Calu3 (cell line): ENCODE measurements at regions of chr21 and their contacts with region 1.

Region 1: DNA sequence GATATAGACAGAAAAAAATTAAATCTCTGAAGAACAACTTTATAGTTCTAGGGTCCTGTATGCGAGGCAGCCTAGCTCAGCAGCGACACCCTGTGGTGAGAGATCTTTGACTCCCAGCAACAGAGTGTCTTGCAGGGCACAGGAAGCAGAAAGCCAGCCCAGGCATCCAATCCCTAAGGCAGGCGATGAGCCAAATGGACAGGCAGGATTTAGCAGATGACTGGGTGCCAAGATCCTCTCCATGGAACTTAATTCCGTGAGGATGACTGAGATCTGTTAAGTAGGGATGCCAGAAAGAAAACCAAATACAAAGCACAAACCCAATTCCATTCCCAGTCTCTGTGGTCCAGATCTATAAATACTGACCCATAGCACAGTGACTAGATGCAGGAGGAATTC is 38.8 kb downstream of the HLCS start:
- DNase-seq: peak; percentile 78
- H3K4me3 Mint-ChIP-seq: no peak overlapping the region
- H3K27ac Mint-ChIP-seq: no peak overlapping the region
- H3K4me1 Mint-ChIP-seq: no peaks in the 10 kb centered on the region
- H3K27me3 Mint-ChIP-seq: no peaks in the 10 kb centered on the region
- CTCF ChIP-seq: peak; percentile 74

Region 2: GRCh38 chr21:36504067-36505058 is 423.4 kb before region 1 on chr21:
- CTCF ChIA-PET with region 1: no interaction called
- intact Hi-C with region 1: loop called (anchors 5 kb)
- DNase-seq: peak; percentile 37
- H3K4me3 Mint-ChIP-seq: no peak overlapping the region
- H3K27ac Mint-ChIP-seq: no peak overlapping the region
- H3K4me1 Mint-ChIP-seq: peaks cover 12% of the 10 kb centered on the region
- H3K27me3 Mint-ChIP-seq: no peaks in the 10 kb centered on the region
- CTCF ChIP-seq: peak; percentile 39

Region 3: DNA sequence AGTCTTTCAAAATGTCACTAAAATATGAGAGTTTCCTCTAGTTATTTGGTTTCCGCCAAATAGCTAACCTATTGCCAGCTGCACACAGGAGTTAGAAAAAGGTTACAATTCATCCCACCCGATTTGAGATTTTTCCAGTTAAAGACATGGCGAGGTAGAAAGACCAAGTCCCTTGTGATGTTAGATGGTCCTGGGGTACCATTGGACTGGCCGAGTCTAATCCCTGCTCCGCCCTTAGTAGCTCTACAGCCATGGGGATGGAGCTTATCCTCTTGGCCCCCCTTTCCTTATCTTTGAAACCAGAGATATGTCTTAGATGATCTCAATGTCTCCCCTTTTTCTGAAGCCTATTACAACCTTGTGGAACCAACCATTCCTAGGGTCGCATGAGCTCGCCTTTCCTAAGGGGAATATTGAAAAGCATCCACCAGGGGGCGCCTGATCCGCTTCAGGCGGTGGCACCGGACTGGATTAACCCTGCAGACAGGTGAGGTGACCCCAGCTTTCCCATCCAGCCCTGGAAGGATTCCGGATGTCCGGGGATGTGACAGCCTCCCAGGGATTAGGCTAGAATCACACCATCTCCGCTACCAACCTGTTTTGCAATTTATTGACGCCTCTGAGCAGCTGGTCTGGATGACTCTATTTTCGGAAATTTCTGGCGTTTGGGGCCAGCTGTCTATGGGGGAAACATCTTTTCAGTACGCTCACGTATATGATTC is 297.1 kb before region 1 on chr21:
- CTCF ChIA-PET with region 1: no interaction called
- intact Hi-C with region 1: loop called (anchors 10 kb)
- DNase-seq: peak; percentile 74
- H3K4me3 Mint-ChIP-seq: no peak overlapping the region
- H3K27ac Mint-ChIP-seq: no peak overlapping the region
- H3K4me1 Mint-ChIP-seq: no peaks in the 10 kb centered on the region
- H3K27me3 Mint-ChIP-seq: no peaks in the 10 kb centered on the region
- CTCF ChIP-seq: peak; percentile 63

Region 4: DNA sequence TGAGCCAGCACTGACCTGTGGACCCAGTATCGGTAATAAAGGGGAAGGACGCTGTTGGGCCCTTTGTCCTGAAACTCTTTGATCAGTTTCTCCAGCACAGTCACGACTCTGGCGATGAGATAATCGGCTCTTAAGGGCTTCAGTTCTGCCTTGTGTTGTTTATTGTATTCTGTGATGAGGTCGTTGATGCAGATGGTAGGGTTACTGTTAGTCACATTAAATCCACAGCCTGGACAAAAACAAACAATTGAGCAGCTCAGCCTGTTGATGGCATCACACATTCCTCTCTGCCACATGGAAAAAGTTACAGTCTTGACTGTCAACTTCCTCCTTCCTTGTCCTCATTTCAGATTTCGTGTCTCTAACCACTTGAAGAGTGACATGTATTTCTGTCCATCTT is 171.2 kb before region 1 on chr21:
- CTCF ChIA-PET with region 1: no interaction called
- intact Hi-C with region 1: loop called (anchors 5 kb)
- DNase-seq: no peak
- H3K4me3 Mint-ChIP-seq: no peak overlapping the region
- H3K27ac Mint-ChIP-seq: no peak overlapping the region
- H3K4me1 Mint-ChIP-seq: no peaks in the 10 kb centered on the region
- H3K27me3 Mint-ChIP-seq: no peaks in the 10 kb centered on the region
- CTCF ChIP-seq: no peak